ENCODE measurements at regions of chr2 and their contacts with region 1.

Region 1: GRCh38 chr2:50143822-50144575 is 887.9 kb downstream of the NRXN1 start:
- DNase-seq: peak; percentile 8
- H3K4me3 Mint-ChIP-seq: peak overlapping the region; percentile 47
- H3K27ac Mint-ChIP-seq: no peak overlapping the region
- H3K4me1 Mint-ChIP-seq: peaks cover 5% of the 10 kb centered on the region
- H3K27me3 Mint-ChIP-seq: no peaks in the 10 kb centered on the region

Region 2: DNA sequence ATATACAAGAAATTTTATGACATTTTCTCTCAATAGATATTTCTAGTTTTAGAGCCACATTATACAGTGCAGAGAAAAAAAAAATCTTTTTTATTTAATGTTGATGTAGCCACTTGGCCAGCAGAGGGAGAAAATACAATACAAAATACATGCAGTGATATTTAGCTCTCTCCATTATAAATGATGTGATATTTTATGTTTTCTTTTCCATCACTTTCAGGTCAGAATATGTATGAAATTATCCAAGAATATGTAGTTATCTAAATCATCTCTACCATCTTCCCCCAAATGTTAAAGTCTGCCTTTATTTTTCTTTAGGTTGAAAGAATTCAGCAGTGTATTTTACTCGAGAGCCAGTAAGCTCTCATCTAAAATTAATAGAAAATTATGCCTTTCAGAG is 456.1 kb before region 1 on chr2:
- intact Hi-C with region 1: loop called (anchors 5 kb)
- DNase-seq: no peak
- H3K4me3 Mint-ChIP-seq: no peak overlapping the region
- H3K27ac Mint-ChIP-seq: no peak overlapping the region
- H3K4me1 Mint-ChIP-seq: no peaks in the 10 kb centered on the region
- H3K27me3 Mint-ChIP-seq: no peaks in the 10 kb centered on the region

Region 3: DNA sequence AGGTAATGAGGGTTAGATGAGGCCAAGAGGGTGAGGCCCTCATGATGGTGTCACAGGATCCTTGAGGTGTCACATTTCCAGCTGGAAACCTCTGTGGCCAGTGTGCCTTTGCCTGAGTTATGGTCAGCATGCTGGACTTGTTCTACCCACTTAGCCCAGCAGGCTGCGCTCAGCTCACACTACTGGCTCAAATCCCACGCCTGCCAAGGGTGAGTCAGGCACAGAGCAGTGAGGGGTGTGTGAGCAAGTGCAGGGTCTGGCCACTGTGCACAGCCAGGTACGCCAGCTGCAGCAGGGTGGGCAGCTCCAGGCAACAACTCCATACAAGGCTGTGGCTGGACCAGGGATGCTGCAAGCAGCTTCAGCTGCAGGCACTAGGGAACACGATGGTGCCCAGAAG is 373.1 kb before region 1 on chr2:
- intact Hi-C with region 1: loop called (anchors 10 kb)
- DNase-seq: no peak
- H3K4me3 Mint-ChIP-seq: no peak overlapping the region
- H3K27ac Mint-ChIP-seq: no peak overlapping the region
- H3K4me1 Mint-ChIP-seq: no peaks in the 10 kb centered on the region
- H3K27me3 Mint-ChIP-seq: no peaks in the 10 kb centered on the region

Measured in activated T-helper 2 cell treated with anti-CD3 and anti-CD28 coated beads, Interferon-gamma antibody, Interleukin-2, Interleukin-4, amounts not matched to agents 10 μg/mL and 5 μg/mL and 100 μg/mL, durations not matched to agents 14 hours and 24 hours and 36 hours (primary cell).